AG04450 (cell line): ENCODE measurements at regions of chr12 and their contacts with region 1.

Region 1: DNA sequence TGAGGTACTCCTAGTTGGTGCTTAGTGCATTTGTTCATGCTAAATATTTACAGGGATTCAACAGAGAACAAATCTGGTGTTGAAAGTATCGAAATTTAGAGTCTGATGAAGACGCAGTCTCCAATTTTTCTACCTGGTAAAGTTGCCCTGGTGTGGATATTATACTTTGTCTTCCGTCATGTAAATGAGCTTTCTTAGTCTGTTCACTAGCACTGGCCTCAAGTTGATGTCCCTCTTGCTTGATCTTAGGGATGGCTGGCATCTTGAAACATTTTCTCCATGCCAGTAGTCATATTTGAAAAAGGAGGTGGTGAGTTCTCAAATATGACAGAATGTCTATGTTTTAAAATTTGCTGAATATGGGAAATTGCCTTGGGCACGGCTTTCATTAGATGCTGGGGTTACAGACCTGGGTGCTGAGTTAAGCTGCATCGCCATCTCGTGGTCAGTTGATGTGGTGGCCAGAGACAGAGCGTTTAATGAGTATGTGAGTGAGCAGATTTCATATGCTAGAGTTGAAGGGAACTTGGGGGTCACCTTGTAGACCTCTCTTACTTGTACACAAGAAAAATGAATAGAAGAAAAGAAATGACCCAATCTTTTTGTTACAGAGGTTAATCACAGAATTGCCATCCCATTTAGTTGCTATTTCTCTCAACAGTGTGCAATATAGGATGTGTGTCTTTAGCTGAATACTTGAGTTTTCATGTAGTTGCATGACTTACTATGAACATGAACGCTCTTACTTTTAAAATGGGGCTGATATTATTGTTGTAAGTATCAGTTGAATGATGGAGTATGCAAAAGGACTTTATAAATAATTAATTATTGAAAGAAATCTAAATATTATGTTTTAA is 172.8 kb upstream of the DCN start:
- DNase-seq: peak; percentile 63
- H3K4me3 ChIP-seq: no peak overlapping the region
- H3K27ac ChIP-seq: no peak overlapping the region
- H3K27me3 ChIP-seq: no peaks in the 10 kb centered on the region
- CTCF ChIP-seq: peak; percentile 97

Region 2: GRCh38 chr12:91332302-91332701 is 23.1 kb before region 1 on chr12:
- CTCF ChIA-PET with region 1: interaction called, 11 read pairs
- POLR2A ChIA-PET with region 1: interaction called, 5 read pairs
- DNase-seq: no peak
- H3K4me3 ChIP-seq: no peak overlapping the region
- H3K27ac ChIP-seq: no peak overlapping the region
- H3K27me3 ChIP-seq: no peaks in the 10 kb centered on the region
- CTCF ChIP-seq: peak; percentile 35